HepG2 (cell line): ENCODE measurements at regions of chr5 and their contacts with region 1.

Region 1: GRCh38 chr5:96807075-96807654 is 580 bp downstream of the ERAP1 start:
- DNase-seq: peak; percentile 61
- ATAC-seq: peak; percentile 77
- H3K4me3 ChIP-seq: peak overlapping the region; percentile 86 to 94 (median 90)
- H3K27ac ChIP-seq: peak overlapping the region; percentile 99
- H3K4me1 ChIP-seq: peaks cover 41% of the 10 kb centered on the region
- H3K27me3 ChIP-seq: no peaks in the 10 kb centered on the region
- CTCF ChIP-seq: no peak
- EP300 ChIP-seq: no peak
- POLR2A ChIP-seq: peak; percentile 70 to 71
- RAD21 ChIP-seq: peak; percentile 51

Region 2: DNA sequence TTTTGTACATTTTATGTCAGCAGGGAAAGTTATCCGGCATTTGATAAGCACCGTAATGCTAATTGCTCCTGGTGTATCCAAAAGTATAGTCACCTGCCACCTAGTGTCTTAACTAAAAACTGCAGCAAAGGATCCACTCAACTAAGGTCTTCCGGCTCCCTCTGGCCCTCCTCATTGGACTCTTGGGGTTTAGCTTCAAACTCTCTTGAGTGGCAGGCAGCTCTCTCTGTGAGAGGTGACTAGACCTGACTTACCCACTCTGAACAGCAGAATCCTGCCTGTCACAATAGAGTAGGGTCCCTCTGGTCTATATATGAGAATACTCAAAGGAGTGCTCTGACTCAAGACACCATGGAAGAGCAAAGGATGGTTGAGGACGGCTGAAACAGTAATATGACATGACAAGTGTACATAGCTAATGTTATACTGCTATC is 205.3 kb before region 1 on chr5:
- CTCF ChIA-PET with region 1: no interaction called
- POLR2A ChIA-PET with region 1: no interaction called
- in situ Hi-C with region 1: no loop called
- intact Hi-C with region 1: no loop called
- DNase-seq: peak; percentile 56
- ATAC-seq: peak; percentile 90
- H3K4me3 ChIP-seq: no peak overlapping the region
- H3K27ac ChIP-seq: no peak overlapping the region
- H3K4me1 ChIP-seq: peaks cover 12% of the 10 kb centered on the region; the same call in 1 of the 2 replicates
- H3K27me3 ChIP-seq: peaks cover 0 to 5% of the 10 kb centered on the region in 2 experiments; a peak in 1 of 5 replicates
- CTCF ChIP-seq: peak; percentile 76
- EP300 ChIP-seq: no peak
- POLR2A ChIP-seq: no peak
- RAD21 ChIP-seq: peak; percentile 49; the same call in 1 of the 2 replicates

Region 3: GRCh38 chr5:96629774-96630173 is 177.4 kb before region 1 on chr5:
- CTCF ChIA-PET with region 1: no interaction called
- POLR2A ChIA-PET with region 1: no interaction called
- in situ Hi-C with region 1: no loop called
- intact Hi-C with region 1: no loop called
- DNase-seq: peak; percentile 7
- ATAC-seq: peak; percentile 66
- H3K4me3 ChIP-seq: no peak overlapping the region
- H3K27ac ChIP-seq: no peak overlapping the region
- H3K4me1 ChIP-seq: peaks cover 23% of the 10 kb centered on the region
- H3K27me3 ChIP-seq: no peaks in the 10 kb centered on the region
- CTCF ChIP-seq: no peak
- EP300 ChIP-seq: no peak
- POLR2A ChIP-seq: no peak
- RAD21 ChIP-seq: no peak

Region 4: GRCh38 chr5:96714951-96715451 is 92.2 kb before region 1 on chr5:
- CTCF ChIA-PET with region 1: no interaction called
- POLR2A ChIA-PET with region 1: interaction called, 12 read pairs
- in situ Hi-C with region 1: no loop called
- intact Hi-C with region 1: no loop called
- DNase-seq: peak; percentile 96
- ATAC-seq: peak; percentile 97
- H3K4me3 ChIP-seq: peak overlapping the region in 2 of 3 experiments; percentile 20 to 23; a peak in 2 of 6 replicates
- H3K27ac ChIP-seq: peak overlapping the region; percentile 95
- H3K4me1 ChIP-seq: peaks cover 49% of the 10 kb centered on the region
- H3K27me3 ChIP-seq: no peaks in the 10 kb centered on the region
- CTCF ChIP-seq: no peak
- EP300 ChIP-seq: peak; percentile 83 to 94
- POLR2A ChIP-seq: no peak
- RAD21 ChIP-seq: no peak

Region 5: GRCh38 chr5:96855031-96855872 is 48.1 kb after region 1 on chr5:
- CTCF ChIA-PET with region 1: no interaction called
- POLR2A ChIA-PET with region 1: no interaction called
- in situ Hi-C with region 1: no loop called
- intact Hi-C with region 1: no loop called
- DNase-seq: no peak
- ATAC-seq: peak; percentile 63; the same call in 1 of the 3 replicates
- H3K4me3 ChIP-seq: peak overlapping the region in 2 of 3 experiments; percentile 13 to 19; a peak in 2 of 6 replicates
- H3K27ac ChIP-seq: no peak overlapping the region
- H3K4me1 ChIP-seq: peaks cover 11% of the 10 kb centered on the region; the same call in 1 of the 2 replicates
- H3K27me3 ChIP-seq: no peaks in the 10 kb centered on the region
- CTCF ChIP-seq: no peak
- EP300 ChIP-seq: no peak
- POLR2A ChIP-seq: no peak
- RAD21 ChIP-seq: no peak

Region 6: GRCh38 chr5:96876292-96876850 is 69.2 kb after region 1 on chr5 and contains the start of gene ERAP2:
- CTCF ChIA-PET with region 1: no interaction called
- POLR2A ChIA-PET with region 1: interaction called, 16 read pairs
- in situ Hi-C with region 1: no loop called
- intact Hi-C with region 1: loop called (anchors 5 kb)
- DNase-seq: peak; percentile 25
- ATAC-seq: peak; percentile 59
- H3K4me3 ChIP-seq: peak within 1 kb of the TSS; percentile 71 to 88 (median 71)
- H3K27ac ChIP-seq: peak within 1 kb of the TSS; percentile 58
- H3K4me1 ChIP-seq: peaks cover 24% of the 10 kb centered on the region
- H3K27me3 ChIP-seq: no peaks in the 10 kb centered on the region
- CTCF ChIP-seq: no peak
- EP300 ChIP-seq: no peak
- POLR2A ChIP-seq: no peak
- RAD21 ChIP-seq: no peak
- total RNA-seq, gene ERAP2: 12.8 and 16.6 TPM in 2 replicates

Region 7: GRCh38 chr5:97101189-97101910 is 294.2 kb after region 1 on chr5:
- CTCF ChIA-PET with region 1: no interaction called
- POLR2A ChIA-PET with region 1: no interaction called
- in situ Hi-C with region 1: no loop called
- intact Hi-C with region 1: no loop called
- DNase-seq: no peak
- ATAC-seq: no peak
- H3K4me3 ChIP-seq: no peak overlapping the region
- H3K27ac ChIP-seq: no peak overlapping the region
- H3K4me1 ChIP-seq: no peaks in the 10 kb centered on the region
- H3K27me3 ChIP-seq: peaks cover 0 to 2% of the 10 kb centered on the region in 2 experiments; a peak in 1 of 5 replicates
- CTCF ChIP-seq: no peak
- EP300 ChIP-seq: no peak
- POLR2A ChIP-seq: no peak
- RAD21 ChIP-seq: no peak

Region 8: GRCh38 chr5:97183100-97183929 is 376.1 kb after region 1 on chr5 and contains the start of gene RIOK2:
- CTCF ChIA-PET with region 1: no interaction called
- POLR2A ChIA-PET with region 1: interaction called, 10 read pairs
- in situ Hi-C with region 1: no loop called
- intact Hi-C with region 1: loop called (anchors 5 kb)
- DNase-seq: peak; percentile 94
- ATAC-seq: peak; percentile 97
- H3K4me3 ChIP-seq: peak within 1 kb of the TSS; percentile 85 to 99 (median 89)
- H3K27ac ChIP-seq: peak within 1 kb of the TSS; percentile 97
- H3K4me1 ChIP-seq: peaks cover 42% of the 10 kb centered on the region
- H3K27me3 ChIP-seq: no peaks in the 10 kb centered on the region; a peak in 1 of 5 replicates
- CTCF ChIP-seq: no peak; the same call in 1 of the 2 replicates
- EP300 ChIP-seq: peak in 1 of 2 experiments; percentile 100; a peak in 1 of 4 replicates
- POLR2A ChIP-seq: peak; percentile 66 to 80
- RAD21 ChIP-seq: no peak
- total RNA-seq, gene RIOK2: 46.6 and 74.0 TPM in 2 replicates